Mammary epithelial cell (primary cell): ENCODE measurements at regions of chr13 and their contacts with region 1.

Region 1: DNA sequence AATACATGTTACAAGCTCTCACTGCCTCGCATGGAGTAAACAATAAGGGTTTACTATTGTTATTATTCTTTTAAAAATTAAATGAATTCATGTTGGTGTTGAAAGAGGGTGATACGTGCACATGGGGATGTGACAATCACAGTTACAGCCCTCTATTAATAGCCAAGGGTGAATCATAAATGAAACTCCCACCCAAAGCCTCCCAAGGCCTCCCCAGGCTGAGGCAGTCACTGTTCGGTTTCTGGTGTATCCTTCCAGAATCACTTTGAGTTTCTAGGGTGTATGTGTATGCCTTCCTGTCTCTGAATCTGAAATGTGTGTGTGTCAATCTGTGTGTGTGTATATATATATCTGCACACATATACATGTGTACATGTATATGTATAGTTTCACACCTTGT is 73.4 kb downstream of the AKAP11 start:
- DNase-seq: no peak
- H3K4me3 ChIP-seq: no peak overlapping the region
- H3K27ac ChIP-seq: no peak overlapping the region
- H3K4me1 ChIP-seq: no peaks in the 10 kb centered on the region
- H3K27me3 ChIP-seq: no peaks in the 10 kb centered on the region
- CTCF ChIP-seq: no peak

Region 2: DNA sequence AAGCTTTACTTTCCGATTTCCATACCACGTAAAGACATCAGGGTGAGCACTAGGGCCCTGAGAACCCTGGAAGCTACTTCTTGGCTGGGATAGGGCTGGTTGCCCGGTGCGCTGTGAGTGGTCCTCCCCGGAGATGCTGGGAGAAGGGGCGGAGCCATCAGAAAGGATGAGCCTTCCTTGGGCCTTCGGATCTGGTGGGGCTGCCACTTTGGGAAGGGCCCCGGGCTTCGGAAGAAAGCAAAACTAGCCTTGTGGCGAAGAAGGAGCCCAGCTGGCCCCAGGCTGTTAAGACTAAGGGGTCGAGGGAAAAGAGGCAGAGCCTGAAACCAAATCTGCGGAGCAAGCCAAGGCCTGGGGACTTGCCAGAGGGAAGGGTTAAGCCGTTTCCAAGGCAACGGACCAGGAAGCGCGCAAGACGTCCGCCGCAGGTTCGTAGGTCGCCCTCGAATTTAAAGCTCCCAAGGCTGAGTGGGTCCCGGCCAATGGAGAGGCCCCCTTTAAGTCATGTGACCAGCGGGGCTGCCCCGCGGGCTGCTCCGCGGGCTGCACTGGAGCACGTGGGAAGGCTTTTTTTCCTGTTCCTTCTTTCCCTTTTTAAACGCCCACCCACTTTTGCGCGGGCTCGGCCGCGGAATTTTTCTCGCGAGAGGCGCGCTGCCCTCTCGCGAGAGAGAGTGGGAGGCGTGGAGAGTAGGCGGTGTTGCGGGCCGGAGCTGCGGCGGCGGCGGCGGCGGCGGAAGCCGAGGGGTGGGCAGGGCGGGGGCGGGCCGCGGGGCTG is 73.8 kb before region 1 on chr13:
- CTCF ChIA-PET with region 1: no interaction called
- dilution Hi-C with region 1: no loop called
- in situ Hi-C with region 1: no loop called
- intact Hi-C with region 1: no loop called
- DNase-seq: peak; percentile 97
- H3K4me3 ChIP-seq: peak overlapping the region; percentile 76 to 90 (median 87)
- H3K27ac ChIP-seq: peak overlapping the region; percentile 86
- H3K4me1 ChIP-seq: peaks cover 21% of the 10 kb centered on the region
- H3K27me3 ChIP-seq: no peaks in the 10 kb centered on the region
- CTCF ChIP-seq: no peak

Region 3: GRCh38 chr13:42304221-42304620 is 41.1 kb before region 1 on chr13:
- CTCF ChIA-PET with region 1: no interaction called
- dilution Hi-C with region 1: loop called (anchors 5 kb)
- in situ Hi-C with region 1: no loop called
- intact Hi-C with region 1: no loop called
- DNase-seq: no peak
- H3K4me3 ChIP-seq: no peak overlapping the region
- H3K27ac ChIP-seq: no peak overlapping the region
- H3K4me1 ChIP-seq: no peaks in the 10 kb centered on the region
- H3K27me3 ChIP-seq: no peaks in the 10 kb centered on the region
- CTCF ChIP-seq: no peak